HCT116 (cell line): ENCODE measurements at regions of chr1 and their contacts with region 1.

Region 1: DNA sequence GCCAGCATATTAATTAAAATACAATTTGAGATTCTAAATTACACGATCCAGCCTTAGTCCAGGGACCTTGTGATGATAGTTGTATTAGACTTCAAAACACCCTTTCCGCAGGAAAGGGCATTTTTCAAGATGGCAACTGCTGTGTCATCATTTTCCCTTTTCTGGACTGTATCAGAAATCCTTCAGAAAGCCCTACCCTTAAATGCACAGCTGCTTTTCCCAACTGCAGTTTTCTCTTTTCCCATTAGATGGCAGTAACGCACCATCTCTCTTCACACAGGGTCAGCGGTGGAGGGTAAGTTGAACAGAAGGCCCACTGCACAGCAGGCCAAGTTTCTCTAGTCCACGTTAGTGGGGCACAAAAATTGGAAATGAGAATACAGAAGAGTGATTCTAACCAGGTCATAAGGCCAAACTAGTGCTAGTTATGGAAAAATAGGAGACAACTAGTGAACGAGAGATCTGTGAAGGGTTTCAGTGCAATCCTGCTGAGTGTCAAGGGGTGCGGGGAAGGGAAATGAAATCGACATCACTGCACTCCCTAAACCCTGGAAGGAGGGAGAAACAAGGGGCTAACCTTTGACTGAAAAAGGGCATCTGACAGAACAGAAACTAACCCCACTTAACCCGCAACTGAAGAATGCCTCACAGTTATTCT is 22.1 kb upstream of the TDRD10 start:
- DNase-seq: peak; percentile 86
- ATAC-seq: peak; percentile 88
- H3K4me3 ChIP-seq: no peak overlapping the region
- H3K27ac ChIP-seq: no peak overlapping the region
- H3K4me1 ChIP-seq: peaks cover 9 to 57% of the 10 kb centered on the region in 2 experiments
- H3K27me3 ChIP-seq: no peaks in the 10 kb centered on the region
- CTCF ChIP-seq: peak; percentile 85 to 97 (median 95)
- POLR2A ChIP-seq: no peak
- RAD21 ChIP-seq: peak; percentile 97

Region 2: GRCh38 chr1:153990468-153991150 is 489.3 kb before region 1 on chr1 and contains the start of gene RPS27:
- CTCF ChIA-PET with region 1: no interaction called
- POLR2A ChIA-PET with region 1: no interaction called
- RAD21 ChIA-PET with region 1: no interaction called
- intact Hi-C with region 1: no loop called
- DNase-seq: peak; percentile 98
- ATAC-seq: peak; percentile 51
- H3K4me3 ChIP-seq: peak within 1 kb of the TSS; percentile 89 to 96
- H3K27ac ChIP-seq: peak within 1 kb of the TSS; percentile 80
- H3K4me1 ChIP-seq: peaks cover 7 to 37% of the 10 kb centered on the region in 2 experiments
- H3K27me3 ChIP-seq: no peaks in the 10 kb centered on the region
- CTCF ChIP-seq: no peak
- POLR2A ChIP-seq: peak; percentile 99
- RAD21 ChIP-seq: no peak
- total RNA-seq, gene RPS27: 1,905 TPM

Region 3: GRCh38 chr1:154183045-154183915 is 296.6 kb before region 1 on chr1:
- CTCF ChIA-PET with region 1: no interaction called
- POLR2A ChIA-PET with region 1: no interaction called
- RAD21 ChIA-PET with region 1: no interaction called
- intact Hi-C with region 1: loop called (anchors 10 kb)
- DNase-seq: peak; percentile 97
- ATAC-seq: peak; percentile 96
- H3K4me3 ChIP-seq: peak overlapping the region; percentile 90 to 98
- H3K27ac ChIP-seq: peak overlapping the region; percentile 78
- H3K4me1 ChIP-seq: peaks cover 19 to 38% of the 10 kb centered on the region in 2 experiments
- H3K27me3 ChIP-seq: no peaks in the 10 kb centered on the region
- CTCF ChIP-seq: no peak
- POLR2A ChIP-seq: peak; percentile 90
- RAD21 ChIP-seq: no peak

Region 4: DNA sequence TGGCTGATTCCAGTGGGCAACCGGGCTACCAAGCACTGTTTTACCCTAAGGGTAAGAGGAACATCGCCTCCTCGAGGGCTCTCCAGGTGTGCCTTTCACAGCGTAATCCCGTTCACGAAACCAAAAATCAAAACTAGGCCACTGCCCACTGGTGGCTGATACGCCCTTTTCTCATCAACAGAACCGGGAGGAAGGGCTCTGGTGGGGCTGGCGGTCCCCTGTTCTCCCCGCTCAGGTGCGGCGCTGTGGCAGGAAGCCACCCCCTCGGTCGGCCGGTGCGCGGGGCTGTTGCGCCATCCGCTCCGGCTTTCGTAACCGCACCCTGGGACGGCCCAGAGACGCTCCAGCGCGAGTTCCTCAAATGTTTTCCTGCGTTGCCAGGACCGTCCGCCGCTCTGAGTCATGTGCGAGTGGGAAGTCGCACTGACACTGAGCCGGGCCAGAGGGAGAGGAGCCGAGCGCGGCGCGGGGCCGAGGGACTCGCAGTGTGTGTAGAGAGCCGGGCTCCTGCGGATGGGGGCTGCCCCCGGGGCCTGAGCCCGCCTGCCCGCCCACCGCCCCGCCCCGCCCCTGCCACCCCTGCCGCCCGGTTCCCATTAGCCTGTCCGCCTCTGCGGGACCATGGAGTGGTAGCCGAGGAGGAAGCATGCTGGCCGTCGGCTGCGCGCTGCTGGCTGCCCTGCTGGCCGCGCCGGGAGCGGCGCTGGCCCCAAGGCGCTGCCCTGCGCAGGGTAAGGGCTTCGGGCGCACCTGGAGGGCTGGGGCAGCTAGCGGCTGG is 74.7 kb before region 1 on chr1 and contains the start of gene IL6R:
- CTCF ChIA-PET with region 1: interaction called, 5 read pairs
- POLR2A ChIA-PET with region 1: no interaction called
- RAD21 ChIA-PET with region 1: no interaction called
- intact Hi-C with region 1: loop called (anchors 1 kb)
- DNase-seq: peak; percentile 82
- ATAC-seq: peak; percentile 82
- H3K4me3 ChIP-seq: peak within 1 kb of the TSS; percentile 61 to 65
- H3K27ac ChIP-seq: peak within 1 kb of the TSS; percentile 69
- H3K4me1 ChIP-seq: peaks cover 30 to 36% of the 10 kb centered on the region in 2 experiments
- H3K27me3 ChIP-seq: no peaks in the 10 kb centered on the region; the same call in 1 of the 2 replicates
- CTCF ChIP-seq: peak; percentile 45 to 91 (median 55); a peak in 5 of 6 replicates
- POLR2A ChIP-seq: no peak
- RAD21 ChIP-seq: peak; percentile 91
- total RNA-seq, gene IL6R: 6.8 TPM

Region 5: GRCh38 chr1:154431586-154432373 is 48.1 kb before region 1 on chr1:
- CTCF ChIA-PET with region 1: no interaction called
- POLR2A ChIA-PET with region 1: no interaction called
- RAD21 ChIA-PET with region 1: no interaction called
- intact Hi-C with region 1: no loop called
- DNase-seq: no peak
- ATAC-seq: peak; percentile 37; the same call in 1 of the 2 replicates
- H3K4me3 ChIP-seq: no peak overlapping the region
- H3K27ac ChIP-seq: peak overlapping the region; percentile 18; the same call in 1 of the 2 replicates
- H3K4me1 ChIP-seq: peaks cover 44 to 61% of the 10 kb centered on the region in 2 experiments
- H3K27me3 ChIP-seq: no peaks in the 10 kb centered on the region
- CTCF ChIP-seq: no peak
- POLR2A ChIP-seq: no peak
- RAD21 ChIP-seq: no peak

Region 6: GRCh38 chr1:154669464-154670282 is 189.8 kb after region 1 on chr1:
- CTCF ChIA-PET with region 1: interaction called, 3 read pairs
- POLR2A ChIA-PET with region 1: no interaction called
- RAD21 ChIA-PET with region 1: no interaction called
- intact Hi-C with region 1: loop called (anchors 5 kb)
- DNase-seq: peak; percentile 67
- ATAC-seq: peak; percentile 100
- H3K4me3 ChIP-seq: no peak overlapping the region
- H3K27ac ChIP-seq: no peak overlapping the region
- H3K4me1 ChIP-seq: peaks cover 0 to 3% of the 10 kb centered on the region in 2 experiments; a peak in 1 of 4 replicates
- H3K27me3 ChIP-seq: no peaks in the 10 kb centered on the region
- CTCF ChIP-seq: peak; percentile 86 to 95 (median 93)
- POLR2A ChIP-seq: no peak
- RAD21 ChIP-seq: peak; percentile 98

Region 7: DNA sequence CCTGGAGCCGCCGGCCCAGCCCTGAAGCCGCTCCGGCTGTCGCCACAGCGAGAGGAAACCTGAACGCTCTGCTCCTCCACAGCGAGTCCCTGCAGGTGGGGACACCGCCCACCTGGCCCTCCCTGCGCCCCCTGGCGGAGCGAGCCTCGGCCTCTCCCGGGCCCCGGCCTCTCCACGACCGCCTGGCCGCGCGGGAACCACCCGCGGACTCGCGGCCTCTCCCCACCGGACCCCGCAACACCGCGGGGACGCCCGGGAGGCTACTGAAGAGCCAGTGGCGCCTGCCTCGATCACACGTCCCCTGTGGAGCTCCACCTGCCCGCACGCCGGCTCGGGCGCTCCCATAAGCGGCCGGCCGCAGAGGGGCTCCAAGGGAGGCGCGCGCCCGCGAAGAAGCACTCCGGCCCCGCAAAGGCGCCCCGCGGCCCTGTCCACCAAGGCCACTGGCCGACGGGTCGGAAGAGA is 280.6 kb after region 1 on chr1:
- CTCF ChIA-PET with region 1: no interaction called
- POLR2A ChIA-PET with region 1: no interaction called
- RAD21 ChIA-PET with region 1: no interaction called
- intact Hi-C with region 1: loop called (anchors 5 kb)
- DNase-seq: peak; percentile 28
- ATAC-seq: peak; percentile 99
- H3K4me3 ChIP-seq: peak overlapping the region; percentile 17 to 42
- H3K27ac ChIP-seq: no peak overlapping the region
- H3K4me1 ChIP-seq: peaks cover 4 to 10% of the 10 kb centered on the region in 2 experiments; a peak in 3 of 4 replicates
- H3K27me3 ChIP-seq: peaks cover 17% of the 10 kb centered on the region
- CTCF ChIP-seq: peak; percentile 71 to 85 (median 74)
- POLR2A ChIP-seq: no peak
- RAD21 ChIP-seq: peak; percentile 66